ENCODE measurements at regions of chr1 and their contacts with region 1.

Region 1: GRCh38 chr1:113021430-113022086 is 51.4 kb upstream of the LRIG2 start:
- DNase-seq: no peak
- ATAC-seq: no peak
- H3K4me3 Mint-ChIP-seq: no peak overlapping the region
- H3K27ac Mint-ChIP-seq: no peak overlapping the region
- H3K4me1 Mint-ChIP-seq: no peaks in the 10 kb centered on the region
- H3K27me3 Mint-ChIP-seq: no peaks in the 10 kb centered on the region
- CTCF ChIP-seq: no peak

Region 2: DNA sequence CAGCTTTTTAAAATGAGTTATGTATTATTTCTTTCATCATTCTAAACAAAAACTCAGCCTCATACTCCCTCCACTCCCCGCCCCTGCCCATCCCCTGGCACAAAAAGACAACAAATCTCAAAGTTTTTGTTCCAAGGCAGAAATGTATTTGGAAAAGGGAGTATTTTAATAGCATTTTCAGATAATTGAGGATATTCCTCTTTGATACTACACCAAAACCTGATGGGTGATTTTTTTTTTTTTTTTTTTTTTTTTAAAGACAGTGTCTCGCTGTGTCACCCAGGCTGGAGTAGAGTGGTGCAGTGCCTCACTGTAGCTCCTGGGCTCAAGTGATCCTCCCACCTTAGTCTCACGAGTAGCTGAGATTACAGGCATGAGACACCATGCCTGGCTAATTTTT is 81.7 kb before region 1 on chr1:
- CTCF ChIA-PET with region 1: no interaction called
- POLR2A ChIA-PET with region 1: interaction called, 15 read pairs
- intact Hi-C with region 1: no loop called
- DNase-seq: no peak
- ATAC-seq: no peak
- H3K4me3 Mint-ChIP-seq: no peak overlapping the region
- H3K27ac Mint-ChIP-seq: no peak overlapping the region
- H3K4me1 Mint-ChIP-seq: peaks cover 7% of the 10 kb centered on the region
- H3K27me3 Mint-ChIP-seq: no peaks in the 10 kb centered on the region
- CTCF ChIP-seq: no peak

Region 3: GRCh38 chr1:112985123-112985522 is 36.4 kb before region 1 on chr1:
- CTCF ChIA-PET with region 1: no interaction called
- POLR2A ChIA-PET with region 1: no interaction called
- intact Hi-C with region 1: no loop called
- DNase-seq: no peak
- ATAC-seq: no peak
- H3K4me3 Mint-ChIP-seq: no peak overlapping the region
- H3K27ac Mint-ChIP-seq: no peak overlapping the region
- H3K4me1 Mint-ChIP-seq: peaks cover 21% of the 10 kb centered on the region
- H3K27me3 Mint-ChIP-seq: no peaks in the 10 kb centered on the region
- CTCF ChIP-seq: no peak

Region 4: GRCh38 chr1:113057006-113057405 is 35.4 kb after region 1 on chr1:
- CTCF ChIA-PET with region 1: no interaction called
- POLR2A ChIA-PET with region 1: interaction called, 13 read pairs
- intact Hi-C with region 1: no loop called
- DNase-seq: no peak
- ATAC-seq: no peak
- H3K4me3 Mint-ChIP-seq: peak overlapping the region; percentile 50
- H3K27ac Mint-ChIP-seq: peak overlapping the region; percentile 35
- H3K4me1 Mint-ChIP-seq: peaks cover 21% of the 10 kb centered on the region
- H3K27me3 Mint-ChIP-seq: no peaks in the 10 kb centered on the region
- CTCF ChIP-seq: no peak